ENCODE measurements at regions of chr9 and their contacts with region 1.

Region 1: DNA sequence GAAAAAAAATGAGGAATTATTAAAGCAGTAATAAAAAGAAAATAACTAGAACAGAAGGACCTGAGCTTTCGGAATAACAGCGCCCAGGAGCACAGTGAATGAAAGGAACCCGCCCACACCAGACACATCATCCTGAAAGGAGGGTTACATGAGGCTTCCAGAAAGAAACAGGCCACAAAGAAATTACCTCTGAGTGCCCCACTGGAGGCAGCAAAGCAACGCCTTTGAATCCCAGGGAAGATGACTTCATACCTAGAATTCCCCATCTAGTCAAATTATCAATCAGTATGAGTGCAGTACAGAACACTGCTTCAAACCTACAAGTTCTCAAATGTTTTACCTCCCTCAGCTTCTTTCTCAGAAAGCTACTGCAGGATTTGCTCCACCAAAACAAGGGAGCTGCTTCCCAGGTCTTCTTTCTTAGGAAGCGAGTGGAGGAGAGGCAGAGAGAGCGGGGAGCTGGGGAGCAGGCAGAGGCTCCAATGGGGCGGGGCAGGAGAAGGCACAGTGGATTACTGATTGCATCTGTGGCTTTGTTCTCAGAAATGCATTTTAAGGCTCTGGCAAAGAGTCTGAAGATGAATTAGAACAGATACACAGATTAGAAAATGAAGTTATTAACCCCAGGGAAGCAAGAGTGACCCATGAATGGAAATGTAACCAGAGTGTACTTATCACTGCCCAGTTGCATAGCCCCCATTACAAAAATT is 87.1 kb downstream of the SEMA4D start:
- DNase-seq: no peak
- ATAC-seq: peak; percentile 12
- H3K4me3 ChIP-seq: no peak overlapping the region
- H3K4me1 ChIP-seq: peaks cover 10% of the 10 kb centered on the region
- CTCF ChIP-seq: no peak

Region 2: DNA sequence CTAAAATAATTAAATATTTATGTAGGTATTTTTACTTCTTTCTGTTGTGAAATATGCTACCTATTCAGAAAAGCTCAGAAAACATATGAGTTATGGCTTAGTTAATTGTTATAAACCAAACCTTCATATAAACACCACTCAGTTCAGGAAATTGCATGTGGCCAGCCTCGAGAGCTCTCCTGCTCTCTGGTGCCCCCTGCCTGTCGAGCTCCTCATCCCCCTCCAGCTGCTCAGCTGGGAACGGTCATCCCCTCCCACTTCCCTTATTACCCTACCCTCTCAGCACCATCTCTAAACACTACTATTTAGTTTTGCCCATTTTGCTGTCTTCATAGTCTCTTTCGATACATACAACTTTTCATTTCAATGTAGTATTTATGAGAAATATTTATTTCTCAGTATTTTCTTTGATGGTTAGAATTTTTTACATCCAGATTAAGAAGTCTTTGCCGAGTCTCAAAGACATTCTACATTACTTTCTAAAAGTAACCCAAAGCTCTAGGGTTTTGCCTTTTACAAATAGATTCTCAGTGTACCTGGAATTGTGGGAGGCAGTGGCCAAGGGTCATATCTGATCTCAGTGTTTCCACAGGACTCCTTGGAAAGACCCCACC is 138.3 kb after region 1 on chr9:
- intact Hi-C with region 1: loop called in 1 of 2 experiments (anchors 10 kb)
- DNase-seq: peak; percentile 86 to 92 (median 90)
- ATAC-seq: peak; percentile 99
- H3K4me3 ChIP-seq: no peak overlapping the region
- H3K4me1 ChIP-seq: no peaks in the 10 kb centered on the region
- CTCF ChIP-seq: peak; percentile 88

Measured in mucosa of descending colon (tissue), 3 donors.